ENCODE measurements at regions of chr1 and their contacts with region 1.

Region 1: DNA sequence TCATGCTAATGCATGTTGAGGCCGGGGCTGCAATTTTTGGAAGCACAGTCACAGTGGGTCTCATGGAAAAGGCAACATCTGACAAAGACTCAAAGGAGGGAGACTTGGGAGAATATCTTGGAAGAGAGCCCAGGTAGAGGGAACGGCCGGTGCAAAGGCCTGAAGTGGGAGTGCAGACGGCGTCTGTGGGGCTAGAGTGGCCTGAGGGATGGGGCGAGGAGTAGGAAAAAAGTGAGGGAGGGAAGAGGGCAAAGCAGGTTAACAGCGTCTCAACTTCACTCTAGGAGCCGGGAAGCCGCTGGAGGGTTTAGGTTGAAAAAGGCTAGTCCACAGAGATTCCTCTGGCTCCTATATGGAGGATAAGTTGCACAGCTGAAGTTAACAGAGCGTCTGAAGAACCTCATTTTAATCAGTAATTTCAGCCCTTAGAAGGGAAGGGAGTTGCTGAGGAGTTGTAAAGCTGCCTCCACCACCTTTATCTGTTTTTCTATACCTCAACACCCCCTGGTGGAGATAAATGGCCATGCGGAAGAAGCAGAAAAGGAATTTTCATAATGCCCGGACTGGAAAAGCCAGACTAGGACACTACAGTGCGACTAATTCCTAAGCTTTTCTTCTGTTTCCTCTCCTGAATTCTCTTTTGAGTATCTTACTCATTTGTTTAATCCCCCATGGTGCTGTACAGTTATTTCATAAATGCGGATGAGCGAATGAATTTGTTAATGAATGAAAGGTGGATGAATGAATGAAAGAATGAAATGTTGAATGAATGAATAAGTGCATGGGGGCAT is 78.7 kb upstream of the ZNF281 start:
- DNase-seq: peak; percentile 46
- H3K4me3 Mint-ChIP-seq: no peak overlapping the region
- H3K27ac Mint-ChIP-seq: no peak overlapping the region
- H3K4me1 Mint-ChIP-seq: peaks cover 14% of the 10 kb centered on the region
- H3K27me3 Mint-ChIP-seq: peaks cover 30% of the 10 kb centered on the region

Region 2: DNA sequence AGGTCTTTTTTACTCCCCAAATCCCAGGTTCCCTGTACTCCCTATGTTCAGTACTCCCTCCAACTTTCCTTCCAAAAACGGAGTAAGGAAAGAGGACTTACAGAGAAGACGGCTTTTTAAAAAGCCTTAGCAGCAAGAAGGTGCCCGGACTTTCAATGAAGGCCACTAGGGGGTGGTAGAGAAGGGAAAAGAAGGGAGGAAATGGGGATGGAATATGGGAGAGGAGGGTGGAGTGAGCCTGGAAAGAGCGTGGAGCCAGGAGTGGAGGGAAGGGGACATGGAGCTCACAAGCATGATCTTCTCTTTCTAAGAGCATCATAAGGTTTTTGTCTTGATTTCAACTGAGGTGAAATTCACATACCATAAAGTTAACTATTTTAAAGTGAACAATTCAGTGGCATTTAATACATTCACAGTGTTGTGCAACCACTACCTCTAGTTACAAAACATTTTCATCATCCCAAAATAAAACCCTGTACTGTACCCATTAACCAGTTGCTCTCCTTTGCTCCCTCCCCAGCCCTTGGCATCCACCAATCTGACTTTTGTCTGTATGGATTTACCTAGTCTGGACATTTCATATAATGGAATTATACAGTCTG is 208.7 kb before region 1 on chr1:
- CTCF ChIA-PET with region 1: interaction called, 10 read pairs
- POLR2A ChIA-PET with region 1: no interaction called
- DNase-seq: peak; percentile 26
- H3K4me3 Mint-ChIP-seq: no peak overlapping the region
- H3K27ac Mint-ChIP-seq: no peak overlapping the region
- H3K4me1 Mint-ChIP-seq: no peaks in the 10 kb centered on the region
- H3K27me3 Mint-ChIP-seq: peaks cover 10% of the 10 kb centered on the region

Region 3: GRCh38 chr1:200422211-200422610 is 66.4 kb before region 1 on chr1:
- CTCF ChIA-PET with region 1: no interaction called
- POLR2A ChIA-PET with region 1: no interaction called
- DNase-seq: no peak
- H3K4me3 Mint-ChIP-seq: no peak overlapping the region
- H3K27ac Mint-ChIP-seq: no peak overlapping the region
- H3K4me1 Mint-ChIP-seq: no peaks in the 10 kb centered on the region
- H3K27me3 Mint-ChIP-seq: peaks cover 5% of the 10 kb centered on the region

Region 4: DNA sequence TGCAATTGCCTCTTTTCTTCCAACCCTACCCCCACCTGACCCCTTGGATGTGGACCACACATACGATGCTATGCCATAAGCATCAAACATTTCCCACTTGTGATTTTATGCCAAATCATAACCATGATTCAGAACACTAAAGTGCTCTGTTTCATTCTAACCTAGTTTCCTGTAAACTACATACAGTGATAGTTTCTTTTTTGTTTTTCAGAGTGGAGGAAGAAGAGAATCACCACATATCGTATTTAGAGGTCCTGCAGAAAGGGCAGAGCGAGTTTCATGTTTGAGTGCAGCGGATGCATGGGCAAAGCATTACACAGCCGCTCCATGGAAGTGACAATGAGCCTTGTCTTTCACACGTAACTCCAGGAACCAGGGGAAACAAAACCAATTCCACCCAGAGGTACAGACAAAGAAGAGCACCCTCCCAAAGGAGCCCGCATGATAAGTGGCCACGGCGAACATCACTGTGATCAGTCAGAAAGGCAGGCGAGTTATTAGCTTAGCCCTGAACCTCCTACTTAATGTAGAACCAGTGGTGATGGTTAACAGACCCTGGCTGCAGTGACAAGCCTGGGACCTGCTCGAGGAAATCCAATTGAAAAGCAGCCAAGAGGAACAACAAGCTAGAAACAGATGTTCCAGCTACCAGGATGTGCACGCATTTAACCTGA is 14.7 kb before region 1 on chr1:
- CTCF ChIA-PET with region 1: interaction called, 3 read pairs
- POLR2A ChIA-PET with region 1: interaction called, 23 read pairs
- DNase-seq: peak; percentile 44
- H3K4me3 Mint-ChIP-seq: peak overlapping the region; percentile 56
- H3K27ac Mint-ChIP-seq: peak overlapping the region; percentile 72
- H3K4me1 Mint-ChIP-seq: peaks cover 30% of the 10 kb centered on the region
- H3K27me3 Mint-ChIP-seq: peaks cover 18% of the 10 kb centered on the region

Region 5: GRCh38 chr1:200610846-200611245 is 122.3 kb after region 1 on chr1:
- CTCF ChIA-PET with region 1: no interaction called
- POLR2A ChIA-PET with region 1: no interaction called
- DNase-seq: no peak
- H3K4me3 Mint-ChIP-seq: no peak overlapping the region
- H3K27ac Mint-ChIP-seq: no peak overlapping the region
- H3K4me1 Mint-ChIP-seq: peaks cover 2% of the 10 kb centered on the region
- H3K27me3 Mint-ChIP-seq: no peaks in the 10 kb centered on the region